K562 (cell line): ENCODE measurements at regions of chr17 and their contacts with region 1.

Region 1: GRCh38 chr17:28598799-28599310 is at the start of gene SPAG5:
- DNase-seq: peak; percentile 98 to 100 (median 100)
- ATAC-seq: peak; percentile 94
- H3K4me3 ChIP-seq: peak within 1 kb of the TSS; percentile 81
- H3K27ac ChIP-seq: peak within 1 kb of the TSS; percentile 88
- H3K4me1 ChIP-seq: peaks cover 8 to 16% of the 10 kb centered on the region in 2 experiments; a peak in 4 of 5 replicates
- H3K27me3 ChIP-seq: no peaks in the 10 kb centered on the region
- CTCF ChIP-seq: no peak
- EP300 ChIP-seq: no peak
- POLR2A ChIP-seq: peak; percentile 98
- RAD21 ChIP-seq: no peak
- polyA plus RNA-seq, gene SPAG5: 94.4 to 286 TPM

Region 2: DNA sequence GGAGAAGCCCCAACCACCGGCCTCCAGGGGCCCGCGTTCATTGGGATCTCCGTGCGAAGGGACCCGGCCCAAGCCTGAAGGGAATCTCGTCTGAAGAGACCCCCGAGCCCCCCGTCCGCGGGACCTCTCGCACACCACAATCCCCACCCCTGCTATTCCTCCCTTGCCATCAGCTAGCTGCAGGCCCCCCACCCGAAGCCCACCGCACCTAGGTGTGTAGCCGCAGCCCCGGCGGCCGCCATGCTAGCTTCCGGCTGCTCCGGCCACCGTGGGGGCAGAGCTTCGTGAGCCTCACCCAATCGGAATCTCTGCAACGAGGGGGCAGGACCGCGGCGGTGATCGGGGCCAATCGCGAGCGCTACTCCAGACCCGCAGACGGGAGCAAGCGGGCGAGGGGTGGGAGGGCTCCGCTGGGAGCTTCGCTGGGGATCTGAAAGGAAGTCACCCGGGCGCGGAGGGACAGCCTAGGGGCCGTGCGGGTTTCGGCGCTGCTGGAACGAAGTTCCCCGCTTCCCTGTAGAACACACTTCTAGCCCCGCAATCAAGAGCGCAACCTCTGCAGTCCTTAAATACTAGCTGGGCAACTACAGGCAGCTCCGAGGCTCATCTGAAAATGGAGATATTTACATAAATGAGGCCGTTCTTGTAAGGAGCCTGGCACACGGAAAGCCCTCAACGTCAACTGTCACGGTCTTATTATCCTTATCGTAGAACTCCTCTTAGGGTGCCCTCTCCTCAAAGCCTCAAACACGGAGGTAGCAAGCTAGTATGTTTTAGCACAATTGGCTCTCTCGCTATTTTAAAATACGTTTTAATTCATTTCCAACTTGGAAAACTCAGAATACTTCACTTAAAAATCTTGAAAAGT is 27.4 kb before region 1 on chr17 and contains the start of gene PIGS:
- CTCF ChIA-PET with region 1: no interaction called
- POLR2A ChIA-PET with region 1: interaction called, 274 read pairs
- in situ Hi-C with region 1: no loop called
- intact Hi-C with region 1: loop called (anchors 2 kb)
- DNase-seq: peak; percentile 95 to 98 (median 96)
- ATAC-seq: peak; percentile 96
- H3K4me3 ChIP-seq: peak within 1 kb of the TSS; percentile 82
- H3K27ac ChIP-seq: peak within 1 kb of the TSS; percentile 83
- H3K4me1 ChIP-seq: peaks cover 25 to 28% of the 10 kb centered on the region in 2 experiments; a peak in 4 of 5 replicates
- H3K27me3 ChIP-seq: no peaks in the 10 kb centered on the region
- CTCF ChIP-seq: no peak
- EP300 ChIP-seq: no peak
- POLR2A ChIP-seq: peak; percentile 91
- RAD21 ChIP-seq: no peak
- polyA plus RNA-seq, gene PIGS: 47.5 to 55.8 TPM

Region 3: DNA sequence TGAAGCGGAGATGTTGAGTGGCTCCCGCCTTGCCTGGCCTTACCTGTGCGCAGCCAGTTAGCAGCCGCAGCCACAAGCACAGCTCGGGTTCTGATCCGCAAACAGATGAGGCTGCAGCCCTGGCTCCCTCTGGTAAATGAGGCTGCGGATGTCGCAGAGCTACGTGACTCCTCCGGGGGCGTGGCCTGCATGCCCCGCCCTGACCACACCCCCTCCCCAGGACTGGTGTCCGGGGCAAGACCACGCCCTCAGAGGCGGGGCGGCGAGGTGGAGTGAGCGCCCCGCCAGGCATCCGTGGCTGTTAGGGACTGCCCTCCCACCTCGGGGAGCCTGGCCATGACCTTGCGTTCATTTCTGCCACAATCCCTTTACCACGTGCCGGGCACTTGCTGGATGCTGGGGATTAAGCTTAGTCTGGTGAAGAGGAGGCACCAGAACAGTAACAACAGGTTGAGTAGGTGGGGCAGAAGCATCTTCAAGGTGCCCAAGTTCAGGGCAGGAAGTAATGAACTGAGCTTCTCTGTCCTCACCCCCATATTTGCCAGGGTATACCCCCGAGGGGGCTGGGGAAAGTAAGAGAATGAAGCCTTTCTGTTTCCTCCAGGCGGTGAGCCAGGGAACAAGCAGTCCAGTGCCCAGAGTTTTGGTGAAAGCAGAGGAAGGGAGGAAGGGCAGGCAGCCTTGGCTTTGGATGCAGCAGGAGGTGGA is 21.9 kb before region 1 on chr17 and contains the start of gene ALDOC:
- CTCF ChIA-PET with region 1: no interaction called
- POLR2A ChIA-PET with region 1: interaction called, 274 read pairs
- in situ Hi-C with region 1: no loop called
- intact Hi-C with region 1: no loop called
- DNase-seq: peak; percentile 100
- ATAC-seq: peak; percentile 97
- H3K4me3 ChIP-seq: peak within 1 kb of the TSS; percentile 44
- H3K27ac ChIP-seq: peak within 1 kb of the TSS; percentile 91
- H3K4me1 ChIP-seq: peaks cover 30 to 32% of the 10 kb centered on the region in 2 experiments
- H3K27me3 ChIP-seq: no peaks in the 10 kb centered on the region
- CTCF ChIP-seq: no peak
- EP300 ChIP-seq: peak; percentile 28; the same call in 1 of the 2 replicates
- POLR2A ChIP-seq: peak; percentile 98
- RAD21 ChIP-seq: no peak
- polyA plus RNA-seq, gene ALDOC: 93.5 to 124 TPM

Region 4: GRCh38 chr17:28612936-28613872 is 14.3 kb after region 1 on chr17:
- CTCF ChIA-PET with region 1: no interaction called
- POLR2A ChIA-PET with region 1: interaction called, 25 read pairs
- in situ Hi-C with region 1: no loop called
- intact Hi-C with region 1: no loop called
- DNase-seq: peak; percentile 58 to 68 (median 66)
- ATAC-seq: peak; percentile 88
- H3K4me3 ChIP-seq: no peak overlapping the region
- H3K27ac ChIP-seq: no peak overlapping the region
- H3K4me1 ChIP-seq: no peaks in the 10 kb centered on the region
- H3K27me3 ChIP-seq: no peaks in the 10 kb centered on the region
- CTCF ChIP-seq: peak; percentile 76 to 87 (median 84)
- EP300 ChIP-seq: no peak
- POLR2A ChIP-seq: no peak; the same call in 1 of the 2 replicates
- RAD21 ChIP-seq: peak; percentile 53 to 72

Region 5: DNA sequence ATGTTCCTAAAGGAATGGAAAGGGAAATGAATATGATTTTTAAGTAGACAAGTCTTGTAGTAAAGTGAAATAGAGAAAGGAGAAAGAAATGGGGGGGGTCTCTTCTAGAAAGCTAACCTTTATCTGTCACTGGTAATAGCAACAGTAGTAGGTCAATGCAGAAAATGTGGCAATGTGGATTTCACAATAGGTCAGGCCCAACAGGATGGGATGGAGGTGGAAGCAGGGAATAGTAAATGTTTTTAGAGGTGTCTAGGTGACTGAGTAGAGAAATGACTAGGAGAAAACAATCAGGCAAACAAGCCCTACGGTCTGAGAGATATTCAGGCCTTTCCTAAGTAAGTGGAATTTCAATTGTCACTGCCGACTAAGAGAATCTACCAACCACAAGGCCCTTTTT is 21.2 kb after region 1 on chr17:
- CTCF ChIA-PET with region 1: no interaction called
- POLR2A ChIA-PET with region 1: interaction called, 10 read pairs
- in situ Hi-C with region 1: no loop called
- intact Hi-C with region 1: no loop called
- DNase-seq: no peak
- ATAC-seq: no peak
- H3K4me3 ChIP-seq: no peak overlapping the region
- H3K27ac ChIP-seq: no peak overlapping the region
- H3K4me1 ChIP-seq: no peaks in the 10 kb centered on the region
- H3K27me3 ChIP-seq: no peaks in the 10 kb centered on the region
- CTCF ChIP-seq: no peak
- EP300 ChIP-seq: no peak
- POLR2A ChIP-seq: no peak
- RAD21 ChIP-seq: no peak

Region 6: DNA sequence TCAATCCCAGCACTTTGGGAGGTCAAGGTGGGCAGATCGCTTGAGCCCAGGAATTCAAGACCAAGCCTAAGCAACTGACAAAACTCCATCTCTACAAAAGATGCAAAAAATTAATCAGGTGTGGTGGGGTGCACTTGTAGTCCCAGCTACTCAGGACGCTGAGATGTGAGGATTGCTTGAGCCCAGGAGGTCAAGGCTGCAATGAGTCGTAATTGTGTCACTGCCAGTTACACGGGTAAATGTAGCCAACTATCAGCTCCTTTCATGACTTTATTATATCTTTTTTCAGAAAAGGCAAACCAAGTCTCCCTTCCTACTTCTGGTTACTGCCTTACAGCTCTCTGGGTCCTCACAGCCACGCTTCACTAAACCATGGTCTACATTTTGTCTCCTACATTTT is 58.9 kb after region 1 on chr17:
- CTCF ChIA-PET with region 1: no interaction called
- POLR2A ChIA-PET with region 1: no interaction called
- in situ Hi-C with region 1: no loop called
- intact Hi-C with region 1: no loop called
- DNase-seq: no peak
- ATAC-seq: no peak
- H3K4me3 ChIP-seq: no peak overlapping the region
- H3K27ac ChIP-seq: no peak overlapping the region
- H3K4me1 ChIP-seq: peaks cover 2 to 5% of the 10 kb centered on the region in 2 experiments; a peak in 3 of 5 replicates
- H3K27me3 ChIP-seq: no peaks in the 10 kb centered on the region
- CTCF ChIP-seq: no peak
- EP300 ChIP-seq: no peak
- POLR2A ChIP-seq: no peak
- RAD21 ChIP-seq: no peak

Region 7: GRCh38 chr17:28902819-28903545 is 304.1 kb after region 1 on chr17 and contains the start of gene DHRS13:
- CTCF ChIA-PET with region 1: no interaction called
- POLR2A ChIA-PET with region 1: interaction called, 4 read pairs
- in situ Hi-C with region 1: no loop called
- intact Hi-C with region 1: loop called (anchors 10 kb)
- DNase-seq: peak; percentile 95 to 98 (median 96)
- ATAC-seq: peak; percentile 88
- H3K4me3 ChIP-seq: peak within 1 kb of the TSS; percentile 81
- H3K27ac ChIP-seq: peak within 1 kb of the TSS; percentile 85
- H3K4me1 ChIP-seq: peaks cover 69 to 72% of the 10 kb centered on the region in 2 experiments; a peak in 4 of 5 replicates
- H3K27me3 ChIP-seq: no peaks in the 10 kb centered on the region
- CTCF ChIP-seq: peak; percentile 99
- EP300 ChIP-seq: peak; percentile 72
- POLR2A ChIP-seq: peak; percentile 20; the same call in 1 of the 2 replicates
- RAD21 ChIP-seq: peak; percentile 80 to 87
- polyA plus RNA-seq, gene DHRS13: 0.32 TPM in 1 of 2 experiments, not detected in the other

Region 8: DNA sequence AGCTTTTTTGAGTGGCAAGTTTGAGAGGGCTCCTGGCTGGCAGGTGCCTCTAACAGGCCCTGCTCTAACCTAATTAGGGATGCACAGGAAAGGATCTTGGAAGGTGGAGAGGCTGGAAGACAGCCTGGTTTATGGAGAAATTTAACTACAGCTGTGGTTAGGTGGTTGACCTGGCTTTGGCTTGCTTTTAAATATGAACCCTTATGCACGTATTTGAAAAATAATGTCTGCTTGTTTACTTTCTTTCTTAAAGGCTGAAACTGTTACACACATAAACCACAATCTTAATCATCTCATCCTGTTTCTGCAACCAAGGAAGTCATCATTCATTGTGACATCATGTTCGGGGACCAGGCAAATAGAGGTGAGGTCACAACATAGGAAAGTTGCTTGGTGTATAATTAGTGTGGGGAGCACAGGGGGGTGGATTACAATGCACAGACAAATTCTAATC is 327.1 kb after region 1 on chr17:
- CTCF ChIA-PET with region 1: no interaction called
- POLR2A ChIA-PET with region 1: no interaction called
- in situ Hi-C with region 1: no loop called
- intact Hi-C with region 1: loop called (anchors 5 kb)
- DNase-seq: peak in 1 of 4 experiments; percentile 61
- ATAC-seq: peak; percentile 65
- H3K4me3 ChIP-seq: no peak overlapping the region
- H3K27ac ChIP-seq: peak overlapping the region; percentile 41; the same call in 2 of the 3 replicates
- H3K4me1 ChIP-seq: peaks cover 6 to 45% of the 10 kb centered on the region in 2 experiments
- H3K27me3 ChIP-seq: no peaks in the 10 kb centered on the region
- CTCF ChIP-seq: no peak
- EP300 ChIP-seq: peak; percentile 66; the same call in 1 of the 2 replicates
- POLR2A ChIP-seq: no peak
- RAD21 ChIP-seq: no peak